OCI-LY7 (cell line): ENCODE measurements at regions of chrX and their contacts with region 1.

Region 1: DNA sequence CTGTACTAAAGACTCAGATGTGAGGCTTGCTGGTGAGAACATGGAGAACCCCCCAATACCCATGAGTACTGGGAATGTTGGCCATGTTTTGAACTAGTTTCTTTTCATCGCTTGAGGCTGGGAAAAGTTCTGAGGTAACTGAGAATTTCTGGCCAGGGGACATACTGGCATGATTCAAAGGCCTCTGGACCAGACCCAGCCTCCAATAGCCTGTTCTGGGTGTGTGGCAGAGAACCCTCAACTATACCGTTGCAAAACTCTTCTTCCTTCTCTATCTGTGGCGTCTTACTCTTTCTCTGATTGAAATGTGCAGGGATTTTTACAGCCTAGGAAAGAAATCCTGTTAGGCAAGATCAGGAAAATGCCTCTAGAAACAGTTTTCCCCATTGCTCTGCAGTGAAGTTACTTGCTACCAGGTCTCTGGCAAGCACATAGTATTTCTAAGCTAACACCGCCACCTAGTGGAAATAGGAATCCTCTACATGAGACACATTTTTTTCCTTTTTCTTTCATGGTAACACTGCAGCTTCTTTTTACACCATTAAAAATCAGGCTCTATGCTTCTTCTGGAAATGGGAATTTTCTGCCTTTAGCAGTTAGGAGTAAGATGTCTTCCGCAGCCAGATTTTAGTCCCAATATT is 170.7 kb upstream of the ZCCHC13 start:
- DNase-seq: peak; percentile 62
- H3K4me3 ChIP-seq: no peak overlapping the region
- H3K27ac ChIP-seq: no peak overlapping the region
- H3K4me1 ChIP-seq: no peaks in the 10 kb centered on the region
- CTCF ChIP-seq: peak; percentile 76

Region 2: DNA sequence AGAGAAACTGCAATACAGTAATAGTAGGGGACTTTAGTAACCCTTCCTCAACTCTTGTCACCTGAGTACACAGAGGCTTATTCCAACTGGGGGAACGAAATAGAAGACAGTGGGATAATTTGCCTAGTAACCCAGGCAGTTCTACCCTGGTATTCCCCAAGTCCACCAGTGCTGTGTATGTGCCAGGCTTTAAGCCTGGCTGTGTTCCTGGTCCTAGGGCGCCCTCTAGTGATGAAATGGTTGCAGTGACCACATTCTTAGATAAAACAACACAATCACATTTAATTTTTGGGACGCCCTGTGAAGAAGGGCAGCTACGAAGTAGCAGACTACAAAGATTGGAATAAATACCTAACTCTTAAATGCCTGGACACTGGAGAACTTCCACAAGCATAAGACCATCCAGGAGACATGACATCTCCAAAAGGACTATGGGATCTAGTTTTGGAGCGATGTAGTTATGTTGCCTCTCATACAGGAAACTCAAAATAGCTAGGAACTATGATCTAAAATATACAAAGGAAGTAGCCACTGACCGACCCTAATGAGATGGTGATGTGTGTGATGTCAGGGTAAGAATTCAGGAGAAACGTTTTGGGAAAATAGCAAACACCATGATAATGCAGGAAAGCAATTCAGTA is 117.8 kb before region 1 on chrX:
- CTCF ChIA-PET with region 1: no interaction called
- POLR2A ChIA-PET with region 1: no interaction called
- intact Hi-C with region 1: loop called (anchors 5 kb)
- DNase-seq: peak; percentile 66
- H3K4me3 ChIP-seq: no peak overlapping the region
- H3K27ac ChIP-seq: no peak overlapping the region
- H3K4me1 ChIP-seq: no peaks in the 10 kb centered on the region
- CTCF ChIP-seq: peak; percentile 81

Region 3: GRCh38 chrX:74343343-74344279 is 210.3 kb after region 1 on chrX:
- CTCF ChIA-PET with region 1: no interaction called
- POLR2A ChIA-PET with region 1: no interaction called
- intact Hi-C with region 1: loop called (anchors 10 kb)
- DNase-seq: peak; percentile 64
- H3K4me3 ChIP-seq: no peak overlapping the region
- H3K27ac ChIP-seq: no peak overlapping the region
- H3K4me1 ChIP-seq: no peaks in the 10 kb centered on the region
- CTCF ChIP-seq: peak; percentile 77